HCT116 (cell line): ENCODE measurements at regions of chr17 and their contacts with region 1.

Region 1: DNA sequence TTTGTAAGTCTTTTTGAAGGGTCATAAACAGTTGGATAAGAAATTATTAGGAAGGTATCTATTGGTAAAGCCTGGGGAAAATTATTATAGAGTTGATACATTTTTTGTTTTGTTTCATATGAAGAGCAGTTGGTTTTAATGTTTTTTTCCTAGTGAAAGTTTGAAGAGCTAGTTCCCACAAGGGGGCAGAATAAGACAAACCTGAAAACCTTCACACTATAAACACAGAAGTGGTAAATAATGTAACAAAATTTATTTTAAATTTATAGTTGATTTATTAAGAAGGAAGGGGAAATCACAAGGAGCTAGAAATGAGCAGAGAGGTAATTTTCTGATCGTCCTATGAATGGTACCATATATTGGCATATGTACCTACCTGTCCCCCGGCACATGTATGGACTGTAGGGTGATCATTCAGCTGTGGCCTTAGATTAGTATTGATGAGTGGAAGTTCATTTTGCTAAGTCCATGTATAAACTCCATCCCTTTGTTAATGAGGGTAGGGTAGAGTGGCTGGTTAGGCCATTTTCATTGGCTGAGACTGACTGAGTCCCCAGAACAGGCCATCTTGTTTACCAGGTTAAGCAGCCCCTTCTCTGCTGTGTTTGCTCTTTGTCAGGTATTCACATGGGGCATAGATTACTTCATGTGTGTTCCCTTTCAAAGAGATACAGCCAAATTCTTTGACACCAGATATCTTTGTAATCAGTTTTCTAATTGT is 116.4 kb downstream of the TANC2 start:
- DNase-seq: peak; percentile 10
- ATAC-seq: peak; percentile 59
- H3K4me3 ChIP-seq: no peak overlapping the region
- H3K27ac ChIP-seq: no peak overlapping the region
- H3K4me1 ChIP-seq: no peaks in the 10 kb centered on the region
- H3K27me3 ChIP-seq: no peaks in the 10 kb centered on the region
- CTCF ChIP-seq: peak; percentile 54 to 58 (median 55)
- POLR2A ChIP-seq: no peak
- RAD21 ChIP-seq: peak; percentile 74

Region 2: DNA sequence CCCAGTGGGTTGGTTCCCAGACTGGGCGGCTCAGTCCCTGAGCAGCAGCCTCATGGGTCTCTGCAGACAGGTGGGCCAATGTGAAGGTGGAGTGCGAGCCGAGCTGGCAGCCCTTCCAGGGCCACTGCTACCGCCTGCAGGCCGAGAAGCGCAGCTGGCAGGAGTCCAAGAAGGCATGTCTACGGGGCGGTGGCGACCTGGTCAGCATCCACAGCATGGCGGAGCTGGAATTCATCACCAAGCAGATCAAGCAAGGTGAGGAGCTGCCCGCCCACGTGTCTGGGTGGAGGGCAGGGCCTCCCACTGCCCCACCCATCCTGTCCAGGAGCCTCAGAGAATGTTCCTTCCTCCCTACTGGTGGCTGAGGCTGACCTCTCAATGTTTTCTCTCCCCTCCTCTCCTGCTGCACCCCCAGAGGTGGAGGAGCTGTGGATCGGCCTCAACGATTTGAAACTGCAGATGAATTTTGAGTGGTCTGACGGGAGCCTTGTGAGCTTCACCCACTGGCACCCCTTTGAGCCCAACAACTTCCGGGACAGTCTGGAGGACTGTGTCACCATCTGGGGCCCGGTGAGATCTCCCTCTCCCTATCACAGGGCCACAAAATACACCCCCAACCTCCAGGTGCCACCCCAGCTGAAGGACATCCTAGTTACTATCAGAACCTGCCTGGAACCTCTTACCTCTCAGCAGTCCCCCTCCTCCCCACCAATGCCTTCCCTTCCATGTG is 410.7 kb before region 1 on chr17:
- CTCF ChIA-PET with region 1: interaction called, 3 read pairs
- POLR2A ChIA-PET with region 1: no interaction called
- RAD21 ChIA-PET with region 1: no interaction called
- intact Hi-C with region 1: loop called (anchors 10 kb)
- DNase-seq: no peak
- ATAC-seq: peak; percentile 39
- H3K4me3 ChIP-seq: no peak overlapping the region
- H3K27ac ChIP-seq: no peak overlapping the region; the same call in 1 of the 2 replicates
- H3K4me1 ChIP-seq: peaks cover 9 to 14% of the 10 kb centered on the region in 2 experiments; a peak in 3 of 4 replicates
- H3K27me3 ChIP-seq: no peaks in the 10 kb centered on the region
- CTCF ChIP-seq: no peak
- POLR2A ChIP-seq: no peak
- RAD21 ChIP-seq: no peak

Region 3: DNA sequence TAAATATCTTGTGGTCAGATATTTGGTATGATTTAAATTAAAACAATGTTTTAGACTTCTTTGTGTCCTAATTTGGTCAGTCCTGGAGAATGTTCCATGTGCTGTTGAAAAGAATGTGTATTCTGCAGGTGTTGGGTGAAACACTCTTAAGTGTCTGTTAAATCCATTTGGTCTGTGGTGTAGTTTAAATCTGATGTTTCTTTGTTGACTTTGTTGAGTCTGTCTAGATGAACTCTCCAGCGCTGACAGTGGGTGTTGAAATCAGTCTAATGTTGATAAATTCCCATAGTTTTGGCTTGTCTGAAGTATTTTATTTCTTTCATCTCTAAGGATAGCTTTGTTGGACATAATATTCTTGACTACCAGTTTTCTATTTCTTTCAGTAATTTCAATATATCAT is 97.6 kb before region 1 on chr17:
- CTCF ChIA-PET with region 1: no interaction called
- POLR2A ChIA-PET with region 1: no interaction called
- RAD21 ChIA-PET with region 1: no interaction called
- intact Hi-C with region 1: no loop called
- DNase-seq: no peak
- ATAC-seq: no peak
- H3K4me3 ChIP-seq: no peak overlapping the region
- H3K27ac ChIP-seq: no peak overlapping the region
- H3K4me1 ChIP-seq: no peaks in the 10 kb centered on the region
- H3K27me3 ChIP-seq: no peaks in the 10 kb centered on the region
- CTCF ChIP-seq: no peak
- POLR2A ChIP-seq: no peak
- RAD21 ChIP-seq: no peak

Region 4: GRCh38 chr17:62995377-62995885 is 87.0 kb before region 1 on chr17:
- CTCF ChIA-PET with region 1: interaction called, 9 read pairs
- POLR2A ChIA-PET with region 1: no interaction called
- RAD21 ChIA-PET with region 1: interaction called in 1 of 2 experiments, 4 read pairs
- intact Hi-C with region 1: loop called (anchors 2 kb)
- DNase-seq: peak; percentile 38
- ATAC-seq: peak; percentile 97
- H3K4me3 ChIP-seq: no peak overlapping the region
- H3K27ac ChIP-seq: no peak overlapping the region
- H3K4me1 ChIP-seq: peaks cover 0 to 4% of the 10 kb centered on the region in 2 experiments; a peak in 1 of 4 replicates
- H3K27me3 ChIP-seq: no peaks in the 10 kb centered on the region
- CTCF ChIP-seq: peak; percentile 71 to 94 (median 89)
- POLR2A ChIP-seq: no peak
- RAD21 ChIP-seq: peak; percentile 87